Caco-2 (cell line): ENCODE measurements at regions of chr6 and their contacts with region 1.

Region 1: GRCh38 chr6:138588805-138589434 is 89.6 kb upstream of the NHSL1 start:
- DNase-seq: peak; percentile 58 to 69
- H3K4me3 ChIP-seq: no peak overlapping the region
- H3K4me3 Mint-ChIP-seq: no peak overlapping the region
- H3K27ac Mint-ChIP-seq: peak overlapping the region; percentile 37
- H3K4me1 ChIP-seq: peaks cover 18% of the 10 kb centered on the region; the same call in 1 of the 2 replicates
- H3K4me1 Mint-ChIP-seq: peaks cover 33% of the 10 kb centered on the region
- H3K27me3 ChIP-seq: no peaks in the 10 kb centered on the region
- H3K27me3 Mint-ChIP-seq: no peaks in the 10 kb centered on the region
- CTCF ChIP-seq: peak; percentile 90 to 91

Region 2: GRCh38 chr6:138287144-138287955 is 301.6 kb before region 1 on chr6:
- CTCF ChIA-PET with region 1: no interaction called
- POLR2A ChIA-PET with region 1: no interaction called
- intact Hi-C with region 1: loop called (anchors 5 kb)
- DNase-seq: peak; percentile 69 to 77
- H3K4me3 ChIP-seq: no peak overlapping the region
- H3K4me3 Mint-ChIP-seq: no peak overlapping the region
- H3K27ac Mint-ChIP-seq: peak overlapping the region; percentile 13
- H3K4me1 ChIP-seq: no peaks in the 10 kb centered on the region
- H3K4me1 Mint-ChIP-seq: no peaks in the 10 kb centered on the region
- H3K27me3 ChIP-seq: no peaks in the 10 kb centered on the region
- H3K27me3 Mint-ChIP-seq: no peaks in the 10 kb centered on the region
- CTCF ChIP-seq: peak; percentile 69 to 81

Region 3: GRCh38 chr6:138428944-138429598 is 159.8 kb before region 1 on chr6:
- CTCF ChIA-PET with region 1: no interaction called
- POLR2A ChIA-PET with region 1: no interaction called
- intact Hi-C with region 1: loop called (anchors 1 kb)
- DNase-seq: peak in 1 of 2 experiments; percentile 45
- H3K4me3 ChIP-seq: no peak overlapping the region
- H3K4me3 Mint-ChIP-seq: no peak overlapping the region
- H3K27ac Mint-ChIP-seq: no peak overlapping the region
- H3K4me1 ChIP-seq: no peaks in the 10 kb centered on the region
- H3K4me1 Mint-ChIP-seq: peaks cover 5% of the 10 kb centered on the region
- H3K27me3 ChIP-seq: no peaks in the 10 kb centered on the region
- H3K27me3 Mint-ChIP-seq: no peaks in the 10 kb centered on the region
- CTCF ChIP-seq: peak; percentile 59 to 65

Region 4: GRCh38 chr6:138538390-138539031 is 50.4 kb before region 1 on chr6:
- CTCF ChIA-PET with region 1: no interaction called
- POLR2A ChIA-PET with region 1: no interaction called
- intact Hi-C with region 1: loop called (anchors 5 kb)
- DNase-seq: no peak
- H3K4me3 ChIP-seq: no peak overlapping the region
- H3K4me3 Mint-ChIP-seq: no peak overlapping the region
- H3K27ac Mint-ChIP-seq: peak overlapping the region; percentile 76
- H3K4me1 ChIP-seq: peaks cover 85% of the 10 kb centered on the region
- H3K4me1 Mint-ChIP-seq: peaks cover 50% of the 10 kb centered on the region
- H3K27me3 ChIP-seq: no peaks in the 10 kb centered on the region
- H3K27me3 Mint-ChIP-seq: no peaks in the 10 kb centered on the region
- CTCF ChIP-seq: no peak

Region 5: DNA sequence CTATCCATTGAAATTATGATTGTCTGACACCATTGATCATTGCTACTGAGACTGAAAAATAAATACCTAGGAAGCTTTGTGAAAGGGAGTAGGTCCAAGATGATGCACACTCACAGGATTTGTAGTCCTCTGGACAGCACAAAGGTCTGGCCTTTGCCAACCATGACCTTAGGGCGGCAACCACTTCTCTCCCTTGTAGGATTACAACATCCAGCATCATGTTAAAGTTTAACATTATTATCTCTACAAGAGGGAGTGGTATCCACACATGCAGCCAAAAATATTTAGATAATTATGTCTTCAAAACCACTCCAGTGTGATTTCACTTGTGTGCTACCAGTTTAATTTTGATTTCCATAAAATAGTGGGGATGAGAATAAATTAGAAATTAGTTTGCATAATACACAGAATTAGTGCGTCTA is 38.6 kb before region 1 on chr6:
- CTCF ChIA-PET with region 1: no interaction called
- POLR2A ChIA-PET with region 1: no interaction called
- intact Hi-C with region 1: loop called (anchors 1 kb)
- DNase-seq: peak; percentile 64 to 72
- H3K4me3 ChIP-seq: no peak overlapping the region
- H3K4me3 Mint-ChIP-seq: peak overlapping the region; percentile 46
- H3K27ac Mint-ChIP-seq: peak overlapping the region; percentile 99
- H3K4me1 ChIP-seq: peaks cover 83% of the 10 kb centered on the region
- H3K4me1 Mint-ChIP-seq: peaks cover 63% of the 10 kb centered on the region
- H3K27me3 ChIP-seq: no peaks in the 10 kb centered on the region
- H3K27me3 Mint-ChIP-seq: no peaks in the 10 kb centered on the region
- CTCF ChIP-seq: no peak

Region 6: DNA sequence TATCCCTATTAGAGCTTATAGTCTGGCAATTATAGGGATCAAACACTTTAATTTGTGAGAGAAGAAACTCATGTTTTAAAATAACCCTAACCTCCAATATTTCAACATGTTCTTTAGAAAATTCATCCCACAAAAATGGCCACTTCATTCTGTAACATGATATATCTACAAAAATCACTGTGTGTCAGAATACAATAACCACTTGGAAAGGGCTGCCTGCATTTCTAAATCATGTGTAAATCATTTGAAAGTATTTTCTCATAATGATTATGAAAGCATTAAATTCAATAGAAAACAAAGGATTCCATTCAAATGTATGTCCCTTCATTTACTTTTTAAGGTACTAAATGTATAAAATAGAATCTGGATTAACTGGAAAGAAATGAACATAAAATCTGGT is 11.8 kb after region 1 on chr6:
- CTCF ChIA-PET with region 1: no interaction called
- POLR2A ChIA-PET with region 1: no interaction called
- intact Hi-C with region 1: no loop called
- DNase-seq: no peak
- H3K4me3 ChIP-seq: no peak overlapping the region
- H3K4me3 Mint-ChIP-seq: no peak overlapping the region
- H3K27ac Mint-ChIP-seq: no peak overlapping the region
- H3K4me1 ChIP-seq: no peaks in the 10 kb centered on the region
- H3K4me1 Mint-ChIP-seq: no peaks in the 10 kb centered on the region
- H3K27me3 ChIP-seq: no peaks in the 10 kb centered on the region
- H3K27me3 Mint-ChIP-seq: no peaks in the 10 kb centered on the region
- CTCF ChIP-seq: no peak

Region 7: DNA sequence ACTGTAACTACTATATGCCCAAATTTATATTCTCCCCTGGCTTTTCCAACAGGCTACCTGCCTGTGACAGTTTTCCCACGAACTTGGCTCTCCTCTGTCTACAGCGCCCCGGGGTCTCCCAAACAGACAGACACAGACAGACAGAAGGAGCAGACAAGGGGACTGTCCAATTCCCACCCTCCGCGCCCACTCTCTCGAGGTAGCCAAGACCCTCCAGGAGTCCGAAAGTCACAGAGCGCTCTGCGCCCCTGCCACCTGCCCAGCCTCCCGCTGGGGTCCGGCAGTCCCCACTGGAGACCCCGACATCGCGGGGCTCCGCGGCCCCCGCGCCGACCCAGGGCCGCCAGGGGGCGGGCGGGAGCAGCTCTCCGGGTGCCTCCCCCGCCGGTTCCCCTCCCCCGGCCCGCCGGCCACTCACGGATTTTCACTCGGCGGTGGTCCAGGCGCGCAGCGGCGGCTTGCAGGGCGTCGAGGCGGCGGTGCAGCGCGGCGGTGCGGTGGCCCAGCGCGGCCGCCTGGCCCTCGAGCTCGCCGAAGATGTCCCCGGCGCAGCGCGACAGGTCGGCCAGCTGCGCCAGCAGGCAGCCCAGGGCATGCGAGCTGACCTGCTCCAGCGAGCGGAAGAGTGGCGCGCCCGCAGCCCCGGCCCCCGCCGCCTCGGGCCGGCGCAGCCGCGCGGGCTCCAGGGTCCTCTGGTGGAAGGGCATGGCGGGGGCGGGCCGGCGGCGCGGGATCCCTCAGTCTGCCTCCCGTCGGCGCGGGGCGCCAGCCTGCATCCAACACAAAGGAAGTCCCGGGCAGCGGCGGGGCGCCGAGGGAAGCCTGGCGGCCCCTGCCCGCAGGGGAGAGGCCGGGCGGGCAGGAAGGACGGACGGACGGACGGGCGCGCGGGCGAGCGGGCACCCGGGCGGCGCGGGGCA is 103.4 kb after region 1 on chr6:
- CTCF ChIA-PET with region 1: no interaction called
- POLR2A ChIA-PET with region 1: interaction called, 3 read pairs
- intact Hi-C with region 1: loop called (anchors 2 kb)
- DNase-seq: peak; percentile 55 to 83
- H3K4me3 ChIP-seq: peak overlapping the region; percentile 84
- H3K4me3 Mint-ChIP-seq: peak overlapping the region; percentile 73
- H3K27ac Mint-ChIP-seq: peak overlapping the region; percentile 63
- H3K4me1 ChIP-seq: no peaks in the 10 kb centered on the region
- H3K4me1 Mint-ChIP-seq: no peaks in the 10 kb centered on the region
- H3K27me3 ChIP-seq: no peaks in the 10 kb centered on the region
- H3K27me3 Mint-ChIP-seq: no peaks in the 10 kb centered on the region
- CTCF ChIP-seq: peak; percentile 61 to 85

Region 8: DNA sequence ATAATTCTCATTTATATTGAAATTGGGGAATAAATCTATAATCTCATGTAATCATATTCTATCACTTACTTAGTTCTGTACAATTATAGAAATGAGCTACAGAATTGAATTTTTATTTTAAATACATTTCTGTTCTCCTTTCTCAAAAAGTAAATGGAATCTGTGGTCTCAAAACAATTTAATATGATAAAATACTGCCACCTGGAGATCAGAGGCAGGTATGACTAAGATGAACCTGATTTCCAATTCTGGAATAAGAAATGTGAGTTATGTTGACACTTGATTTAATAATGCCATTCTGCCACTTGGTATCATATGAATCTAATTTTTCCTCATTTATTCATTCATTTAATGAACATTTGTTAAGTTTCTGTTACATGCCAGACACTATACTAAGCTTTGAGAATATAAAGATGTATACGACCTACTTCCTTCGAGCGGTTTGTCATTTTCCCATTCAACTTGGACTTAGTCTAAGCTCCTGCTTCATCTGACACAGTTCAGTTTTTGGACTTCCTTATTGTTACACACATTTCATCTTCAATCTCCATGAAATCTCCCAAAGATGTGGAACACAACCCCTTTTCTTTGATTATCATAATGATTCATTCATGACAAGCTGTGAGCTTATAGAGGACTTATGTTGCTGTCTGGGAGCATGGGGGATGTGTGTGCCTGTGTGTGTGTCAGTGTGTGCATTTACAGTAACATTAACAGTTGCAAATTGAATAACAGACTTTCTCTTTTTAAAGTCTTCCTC is 177.2 kb after region 1 on chr6:
- CTCF ChIA-PET with region 1: no interaction called
- POLR2A ChIA-PET with region 1: no interaction called
- intact Hi-C with region 1: loop called (anchors 1 kb)
- DNase-seq: peak in 1 of 2 experiments; percentile 25
- H3K4me3 ChIP-seq: no peak overlapping the region
- H3K4me3 Mint-ChIP-seq: no peak overlapping the region
- H3K27ac Mint-ChIP-seq: no peak overlapping the region
- H3K4me1 ChIP-seq: no peaks in the 10 kb centered on the region
- H3K4me1 Mint-ChIP-seq: no peaks in the 10 kb centered on the region
- H3K27me3 ChIP-seq: no peaks in the 10 kb centered on the region
- H3K27me3 Mint-ChIP-seq: no peaks in the 10 kb centered on the region
- CTCF ChIP-seq: peak; percentile 40 to 49

Region 9: GRCh38 chr6:138909511-138909910 is 320.6 kb after region 1 on chr6:
- CTCF ChIA-PET with region 1: no interaction called
- POLR2A ChIA-PET with region 1: no interaction called
- intact Hi-C with region 1: no loop called
- DNase-seq: no peak
- H3K4me3 ChIP-seq: no peak overlapping the region
- H3K4me3 Mint-ChIP-seq: no peak overlapping the region
- H3K27ac Mint-ChIP-seq: no peak overlapping the region
- H3K4me1 ChIP-seq: no peaks in the 10 kb centered on the region
- H3K4me1 Mint-ChIP-seq: no peaks in the 10 kb centered on the region
- H3K27me3 ChIP-seq: no peaks in the 10 kb centered on the region
- H3K27me3 Mint-ChIP-seq: no peaks in the 10 kb centered on the region
- CTCF ChIP-seq: no peak